ENCODE measurements at regions of chr2 and their contacts with region 1.

Region 1: GRCh38 chr2:74690571-74690970 is 36.5 kb downstream of the SEMA4F start:
- DNase-seq: peak; percentile 13
- H3K4me3 ChIP-seq: no peak overlapping the region
- H3K27me3 ChIP-seq: peaks cover 4% of the 10 kb centered on the region
- CTCF ChIP-seq: peak; percentile 77

Region 2: GRCh38 chr2:74703373-74703772 is 12.8 kb after region 1 on chr2:
- CTCF ChIA-PET with region 1: interaction called, 26 read pairs
- POLR2A ChIA-PET with region 1: no interaction called
- DNase-seq: no peak
- H3K4me3 ChIP-seq: no peak overlapping the region
- H3K27me3 ChIP-seq: peaks cover 3% of the 10 kb centered on the region
- CTCF ChIP-seq: no peak

Region 3: GRCh38 chr2:74744731-74745675 is 54.4 kb after region 1 on chr2:
- CTCF ChIA-PET with region 1: no interaction called
- POLR2A ChIA-PET with region 1: no interaction called
- DNase-seq: no peak
- H3K4me3 ChIP-seq: no peak overlapping the region
- H3K27me3 ChIP-seq: no peaks in the 10 kb centered on the region
- CTCF ChIP-seq: no peak

Region 4: GRCh38 chr2:74824679-74825078 is 134.1 kb after region 1 on chr2:
- CTCF ChIA-PET with region 1: no interaction called
- POLR2A ChIA-PET with region 1: no interaction called
- DNase-seq: no peak
- H3K4me3 ChIP-seq: no peak overlapping the region
- H3K27me3 ChIP-seq: peaks cover 2% of the 10 kb centered on the region; the same call in 1 of the 2 replicates
- CTCF ChIP-seq: no peak